ENCODE measurements at regions of chr11 and their contacts with region 1.

Region 1: GRCh38 chr11:111047374-111047773 is 198.2 kb upstream of the POU2AF2 start:
- ATAC-seq: peak in 5 of 8 experiments; percentile 38 to 91 (median 70)
- H3K4me3 ChIP-seq: no peak overlapping the region
- H3K27ac ChIP-seq: no peak overlapping the region
- H3K4me1 ChIP-seq: peaks cover 18 to 21% of the 10 kb centered on the region in 2 donors

Region 2: DNA sequence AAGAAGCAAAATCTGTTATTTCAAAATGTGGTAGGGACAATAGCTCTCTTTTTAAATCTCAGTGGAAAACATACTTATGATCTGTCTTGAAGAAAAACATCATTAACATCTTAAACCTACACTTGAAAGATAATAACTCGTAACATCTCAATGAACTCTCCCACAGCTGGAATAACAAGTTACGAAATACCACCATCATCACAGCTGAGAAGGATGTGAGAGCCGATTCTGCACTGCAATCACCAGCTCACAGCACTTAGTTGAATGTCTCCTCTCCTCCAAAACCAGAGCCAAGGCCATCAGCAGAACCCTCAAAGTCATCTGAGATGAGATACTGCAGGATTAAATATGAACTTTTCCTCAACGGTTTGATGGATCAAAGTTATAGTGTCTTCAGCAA is 459.4 kb before region 1 on chr11:
- in situ Hi-C with region 1: no loop called
- ATAC-seq: no peak
- H3K4me3 ChIP-seq: no peak overlapping the region
- H3K27ac ChIP-seq: no peak overlapping the region
- H3K4me1 ChIP-seq: no peaks in the 10 kb centered on the region

Region 3: GRCh38 chr11:110948112-110948511 is 99.3 kb before region 1 on chr11:
- in situ Hi-C with region 1: loop called in 1 of 9 experiments (anchors 25 kb)
- ATAC-seq: peak in 2 of 8 experiments; percentile 67 to 85
- H3K4me3 ChIP-seq: no peak overlapping the region
- H3K27ac ChIP-seq: no peak overlapping the region
- H3K4me1 ChIP-seq: no peaks in the 10 kb centered on the region

Region 4: GRCh38 chr11:111200010-111200534 is 152.7 kb after region 1 on chr11:
- in situ Hi-C with region 1: no loop called
- ATAC-seq: no peak
- H3K4me3 ChIP-seq: no peak overlapping the region
- H3K27ac ChIP-seq: no peak overlapping the region
- H3K4me1 ChIP-seq: no peaks in the 10 kb centered on the region

Region 5: GRCh38 chr11:111540114-111540936 is 493.0 kb after region 1 on chr11 and contains the start of gene LAYN:
- in situ Hi-C with region 1: no loop called
- ATAC-seq: peak; percentile 39 to 86 (median 81)
- H3K4me3 ChIP-seq: peak within 1 kb of the TSS; percentile 24 to 31 (median 29)
- H3K27ac ChIP-seq: no peak within 1 kb of the TSS
- H3K4me1 ChIP-seq: no peaks in the 10 kb centered on the region
- total RNA-seq, gene LAYN: 0.21 to 11.8 (median 0.54) TPM in 7 of 8 experiments, not detected in the other

Measured in motor neuron (in vitro differentiated cells).